Vagina (tissue), 2 donors: ENCODE measurements at regions of chr15 and their contacts with region 1.

Region 1: DNA sequence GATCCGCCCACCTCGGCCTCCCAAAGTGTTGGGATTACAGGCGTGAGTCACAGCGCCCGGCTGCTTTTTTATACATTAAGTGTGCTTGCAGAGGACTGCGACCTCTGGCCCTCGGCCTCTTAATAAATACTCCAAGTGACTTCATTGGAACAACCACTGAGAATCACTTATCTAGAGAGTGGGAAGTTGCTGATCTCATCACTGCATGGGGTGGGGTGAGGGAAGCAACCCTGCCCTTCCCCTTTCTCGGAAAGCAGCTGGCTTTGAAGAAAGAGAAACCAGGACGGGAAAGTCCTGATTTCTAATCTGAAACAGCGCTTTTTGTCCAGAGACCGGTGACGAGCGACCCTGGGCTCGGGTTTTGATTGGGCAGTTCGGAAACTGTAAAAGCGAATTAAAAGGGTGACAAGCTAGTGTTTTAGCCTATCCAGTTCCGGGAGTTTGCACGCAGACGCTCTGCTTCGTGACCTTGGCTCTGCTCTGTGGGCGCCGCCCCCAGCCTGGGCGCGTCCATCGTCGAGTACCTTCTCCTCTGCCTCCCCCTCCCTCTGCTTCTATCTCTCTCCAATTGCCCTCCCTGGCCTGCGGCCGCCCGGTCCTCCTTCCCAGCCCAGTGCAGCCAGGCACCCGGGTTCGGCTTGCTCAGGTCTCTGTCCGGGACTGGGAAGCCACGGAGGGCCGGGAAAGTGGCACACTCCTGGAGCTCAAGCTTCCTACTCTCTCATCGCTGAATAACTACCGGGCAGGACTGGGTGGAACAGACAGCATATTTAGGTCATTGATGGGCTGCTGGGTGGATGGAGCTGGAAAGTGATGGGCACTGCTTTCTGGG is 7.5 kb upstream of the TRIM69 start:
- DNase-seq: peak in 1 of 2 donors; percentile 99
- H3K4me3 ChIP-seq: peak overlapping the region; percentile 88 to 91
- H3K27ac ChIP-seq: peak overlapping the region; percentile 99
- H3K4me1 ChIP-seq: peaks cover 51% of the 10 kb centered on the region
- H3K27me3 ChIP-seq: no peaks in the 10 kb centered on the region
- CTCF ChIP-seq: no peak
- POLR2A ChIP-seq: peak in 1 of 2 donors; percentile 83

Region 2: GRCh38 chr15:44009056-44009455 is 719.7 kb before region 1 on chr15:
- intact Hi-C with region 1: no loop called
- DNase-seq: no peak
- H3K4me3 ChIP-seq: no peak overlapping the region
- H3K27ac ChIP-seq: no peak overlapping the region
- H3K4me1 ChIP-seq: no peaks in the 10 kb centered on the region
- H3K27me3 ChIP-seq: no peaks in the 10 kb centered on the region
- CTCF ChIP-seq: no peak
- POLR2A ChIP-seq: no peak

Region 3: DNA sequence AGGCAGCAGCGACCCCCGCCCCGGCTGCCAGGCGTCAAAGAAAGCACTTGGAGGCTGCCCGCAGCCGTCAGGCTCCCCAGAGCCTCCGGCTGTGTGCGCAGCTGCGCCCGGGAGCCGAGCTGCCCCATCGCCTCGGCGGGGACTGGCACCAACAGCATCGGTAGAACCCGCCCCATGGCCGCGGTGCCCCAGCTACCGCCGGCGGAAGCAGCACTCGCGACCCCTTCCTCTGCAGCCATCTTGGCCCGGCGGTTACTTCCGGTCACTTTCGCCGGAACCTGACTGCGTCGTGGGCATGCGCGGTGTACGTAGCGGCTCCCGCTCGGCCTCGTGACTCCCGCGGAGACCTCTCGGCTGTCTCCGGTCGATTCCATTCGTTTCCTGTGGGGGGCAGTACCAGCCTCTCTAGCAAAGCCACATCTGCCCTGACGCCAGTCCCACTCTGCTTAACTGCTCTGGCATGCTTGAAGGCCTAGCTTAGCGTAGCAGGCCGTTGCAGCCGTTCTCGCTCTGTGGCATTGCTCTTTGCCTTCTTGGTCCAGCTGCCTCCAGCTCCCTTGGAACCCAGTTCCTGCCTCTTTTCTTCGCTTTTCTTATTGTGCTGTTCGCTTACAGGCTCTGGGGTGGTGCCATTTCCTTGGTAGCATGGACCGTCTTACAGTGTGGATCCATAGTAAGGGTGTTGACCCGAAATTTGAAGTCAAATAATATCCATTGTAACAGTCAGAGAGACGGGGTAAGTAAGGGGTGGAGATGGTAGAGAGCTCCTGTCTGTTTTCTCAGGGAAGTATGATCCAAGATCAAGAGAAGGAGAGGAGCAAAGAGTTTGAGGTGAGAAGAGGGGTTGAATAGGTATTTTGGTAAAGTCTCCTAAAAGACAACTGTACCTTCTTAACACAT is 65.1 kb before region 1 on chr15 and contains the start of gene SPG11:
- intact Hi-C with region 1: loop called (anchors 5 kb)
- DNase-seq: peak in 1 of 2 donors; percentile 96
- H3K4me3 ChIP-seq: peak within 1 kb of the TSS; percentile 95 to 100
- H3K27ac ChIP-seq: peak within 1 kb of the TSS; percentile 96
- H3K4me1 ChIP-seq: peaks cover 25% of the 10 kb centered on the region
- H3K27me3 ChIP-seq: no peaks in the 10 kb centered on the region
- CTCF ChIP-seq: peak; percentile 55 to 95 (median 82)
- POLR2A ChIP-seq: peak in 1 of 2 donors; percentile 80
- total RNA-seq, gene SPG11: 98.2 TPM

Region 4: DNA sequence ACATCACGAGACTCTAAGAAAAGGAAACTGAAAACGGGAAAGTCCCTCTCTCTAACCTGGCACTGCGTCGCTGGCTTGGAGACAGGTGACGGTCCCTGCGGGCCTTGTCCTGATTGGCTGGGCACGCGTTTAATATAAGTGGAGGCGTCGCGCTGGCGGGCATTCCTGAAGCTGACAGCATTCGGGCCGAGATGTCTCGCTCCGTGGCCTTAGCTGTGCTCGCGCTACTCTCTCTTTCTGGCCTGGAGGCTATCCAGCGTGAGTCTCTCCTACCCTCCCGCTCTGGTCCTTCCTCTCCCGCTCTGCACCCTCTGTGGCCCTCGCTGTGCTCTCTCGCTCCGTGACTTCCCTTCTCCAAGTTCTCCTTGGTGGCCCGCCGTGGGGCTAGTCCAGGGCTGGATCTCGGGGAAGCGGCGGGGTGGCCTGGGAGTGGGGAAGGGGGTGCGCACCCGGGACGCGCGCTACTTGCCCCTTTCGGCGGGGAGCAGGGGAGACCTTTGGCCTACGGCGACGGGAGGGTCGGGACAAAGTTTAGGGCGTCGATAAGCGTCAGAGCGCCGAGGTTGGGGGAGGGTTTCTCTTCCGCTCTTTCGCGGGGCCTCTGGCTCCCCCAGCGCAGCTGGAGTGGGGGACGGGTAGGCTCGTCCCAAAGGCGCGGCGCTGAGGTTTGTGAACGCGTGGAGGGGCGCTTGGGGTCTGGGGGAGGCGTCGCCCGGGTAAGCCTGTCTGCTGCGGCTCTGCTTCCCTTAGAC is 17.3 kb before region 1 on chr15 and contains the start of gene B2M:
- intact Hi-C with region 1: loop called (anchors 2 kb)
- DNase-seq: peak; percentile 99
- H3K4me3 ChIP-seq: peak within 1 kb of the TSS; percentile 95 to 99
- H3K27ac ChIP-seq: peak within 1 kb of the TSS; percentile 100
- H3K4me1 ChIP-seq: peaks cover 44% of the 10 kb centered on the region
- H3K27me3 ChIP-seq: no peaks in the 10 kb centered on the region
- CTCF ChIP-seq: no peak
- POLR2A ChIP-seq: peak; percentile 82 to 100
- total RNA-seq, gene B2M: 2,630 TPM